Activated CD8-positive, alpha-beta memory T cell treated with anti-CD3 and anti-CD28 coated beads, Interleukin-2, amount 10 ng/mL, durations not matched to agents 7 days and 5 days (primary cell): ENCODE measurements at regions of chr3 and their contacts with region 1.

Region 1: DNA sequence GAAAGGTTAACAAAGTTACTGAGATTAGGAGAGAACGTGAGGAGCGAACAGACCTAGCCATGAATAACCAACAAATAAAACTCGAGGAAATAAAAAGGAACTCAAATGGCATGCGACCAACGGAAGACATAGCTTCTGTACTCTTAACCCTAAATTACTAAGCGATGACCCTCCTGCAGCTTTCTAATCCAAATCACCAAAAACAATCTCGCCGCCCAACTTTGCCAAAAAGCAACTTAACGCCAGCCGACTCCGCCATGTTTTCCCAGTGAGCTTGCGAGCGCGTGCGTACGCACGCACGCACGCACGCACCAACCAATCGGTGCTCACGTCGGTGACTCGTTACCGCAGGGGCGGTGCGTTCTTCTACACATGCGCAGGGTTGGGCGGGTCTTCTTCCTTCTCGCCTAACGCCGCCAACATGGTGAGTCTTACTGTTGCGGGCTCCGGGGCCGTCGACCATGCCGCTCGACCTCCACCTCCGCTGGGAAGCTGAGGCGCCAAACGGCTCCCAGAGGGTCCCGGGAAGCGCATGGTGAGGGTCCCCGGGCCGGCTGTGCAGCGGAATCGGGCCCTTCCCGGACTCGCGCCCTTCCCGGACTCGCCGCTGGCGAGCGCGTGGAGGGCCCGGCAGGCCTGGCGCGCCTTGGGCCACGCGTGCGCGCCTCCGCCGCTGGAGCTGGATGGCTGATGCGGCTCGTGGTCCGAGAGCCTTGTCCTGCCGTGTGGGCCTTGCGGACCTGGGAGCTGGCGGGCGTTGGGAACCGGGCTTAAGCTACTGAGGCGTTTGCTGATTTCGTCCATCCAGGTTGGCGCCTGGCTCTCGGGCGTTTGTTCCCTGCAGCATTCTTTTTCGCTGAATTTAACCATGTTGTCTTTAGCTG is at the start of gene RPL14:
- DNase-seq: peak; percentile 97
- ATAC-seq: peak; percentile 72
- H3K4me3 Mint-ChIP-seq: peak within 1 kb of the TSS; percentile 93
- H3K27ac Mint-ChIP-seq: peak within 1 kb of the TSS; percentile 88
- H3K4me1 Mint-ChIP-seq: peaks cover 69% of the 10 kb centered on the region
- H3K27me3 Mint-ChIP-seq: no peaks in the 10 kb centered on the region
- total RNA-seq, gene RPL14: 1,755 to 2,066 TPM

Region 2: DNA sequence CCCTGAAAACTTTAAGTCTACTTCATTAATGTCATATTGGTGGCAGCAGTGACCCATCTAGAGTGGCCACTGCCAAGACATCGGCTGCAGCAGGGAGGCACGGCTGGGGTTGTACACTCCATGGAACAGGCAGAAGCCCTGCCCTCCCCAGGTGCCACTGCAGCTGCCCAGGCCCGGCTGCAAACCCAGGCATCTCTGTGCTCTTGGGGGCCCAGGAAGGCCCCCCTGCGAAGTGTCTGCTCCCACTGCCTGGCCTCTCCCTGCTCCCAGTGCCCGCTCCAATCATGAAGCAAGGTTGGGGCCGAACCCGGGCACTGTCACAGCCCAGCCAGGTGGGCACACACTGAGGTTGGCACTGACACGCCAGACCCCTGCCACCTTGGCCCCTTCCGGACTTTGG is 12.1 kb before region 1 on chr3:
- CTCF ChIA-PET with region 1: no interaction called
- DNase-seq: no peak
- ATAC-seq: no peak
- H3K4me3 Mint-ChIP-seq: no peak overlapping the region
- H3K27ac Mint-ChIP-seq: no peak overlapping the region
- H3K4me1 Mint-ChIP-seq: no peaks in the 10 kb centered on the region
- H3K27me3 Mint-ChIP-seq: no peaks in the 10 kb centered on the region

Region 3: GRCh38 chr3:40476478-40477470 is 19.6 kb after region 1 on chr3 and contains the start of gene ZNF619:
- CTCF ChIA-PET with region 1: interaction called, 10 read pairs
- DNase-seq: peak; percentile 73
- ATAC-seq: peak; percentile 93
- H3K4me3 Mint-ChIP-seq: peak within 1 kb of the TSS; percentile 85
- H3K27ac Mint-ChIP-seq: peak within 1 kb of the TSS; percentile 86
- H3K4me1 Mint-ChIP-seq: peaks cover 26% of the 10 kb centered on the region
- H3K27me3 Mint-ChIP-seq: no peaks in the 10 kb centered on the region
- total RNA-seq, gene ZNF619: 10.1 to 11.0 TPM